ENCODE measurements at regions of chr10 and their contacts with region 1.

Region 1: GRCh38 chr10:71727738-71728737 is 8.5 kb upstream of the C10orf105 start:
- DNase-seq: peak; percentile 41
- H3K4me3 Mint-ChIP-seq: peak overlapping the region; percentile 49
- H3K27ac Mint-ChIP-seq: peak overlapping the region; percentile 97
- H3K4me1 Mint-ChIP-seq: peaks cover 67% of the 10 kb centered on the region
- H3K27me3 Mint-ChIP-seq: no peaks in the 10 kb centered on the region

Region 2: GRCh38 chr10:71713135-71714030 is 14.7 kb before region 1 on chr10:
- intact Hi-C with region 1: loop called (anchors 1 kb)
- DNase-seq: peak; percentile 28
- H3K4me3 Mint-ChIP-seq: peak overlapping the region; percentile 64
- H3K27ac Mint-ChIP-seq: peak overlapping the region; percentile 99
- H3K4me1 Mint-ChIP-seq: peaks cover 36% of the 10 kb centered on the region
- H3K27me3 Mint-ChIP-seq: no peaks in the 10 kb centered on the region

Region 3: GRCh38 chr10:71748671-71749191 is 20.7 kb after region 1 on chr10:
- intact Hi-C with region 1: loop called (anchors 1 kb)
- DNase-seq: peak; percentile 83
- H3K4me3 Mint-ChIP-seq: peak overlapping the region; percentile 69
- H3K27ac Mint-ChIP-seq: peak overlapping the region; percentile 99
- H3K4me1 Mint-ChIP-seq: peaks cover 85% of the 10 kb centered on the region
- H3K27me3 Mint-ChIP-seq: no peaks in the 10 kb centered on the region

Region 4: GRCh38 chr10:71790749-71791552 is 62.9 kb after region 1 on chr10:
- intact Hi-C with region 1: no loop called
- DNase-seq: no peak
- H3K4me3 Mint-ChIP-seq: no peak overlapping the region
- H3K27ac Mint-ChIP-seq: no peak overlapping the region
- H3K4me1 Mint-ChIP-seq: peaks cover 6% of the 10 kb centered on the region
- H3K27me3 Mint-ChIP-seq: peaks cover 2% of the 10 kb centered on the region

Region 5: DNA sequence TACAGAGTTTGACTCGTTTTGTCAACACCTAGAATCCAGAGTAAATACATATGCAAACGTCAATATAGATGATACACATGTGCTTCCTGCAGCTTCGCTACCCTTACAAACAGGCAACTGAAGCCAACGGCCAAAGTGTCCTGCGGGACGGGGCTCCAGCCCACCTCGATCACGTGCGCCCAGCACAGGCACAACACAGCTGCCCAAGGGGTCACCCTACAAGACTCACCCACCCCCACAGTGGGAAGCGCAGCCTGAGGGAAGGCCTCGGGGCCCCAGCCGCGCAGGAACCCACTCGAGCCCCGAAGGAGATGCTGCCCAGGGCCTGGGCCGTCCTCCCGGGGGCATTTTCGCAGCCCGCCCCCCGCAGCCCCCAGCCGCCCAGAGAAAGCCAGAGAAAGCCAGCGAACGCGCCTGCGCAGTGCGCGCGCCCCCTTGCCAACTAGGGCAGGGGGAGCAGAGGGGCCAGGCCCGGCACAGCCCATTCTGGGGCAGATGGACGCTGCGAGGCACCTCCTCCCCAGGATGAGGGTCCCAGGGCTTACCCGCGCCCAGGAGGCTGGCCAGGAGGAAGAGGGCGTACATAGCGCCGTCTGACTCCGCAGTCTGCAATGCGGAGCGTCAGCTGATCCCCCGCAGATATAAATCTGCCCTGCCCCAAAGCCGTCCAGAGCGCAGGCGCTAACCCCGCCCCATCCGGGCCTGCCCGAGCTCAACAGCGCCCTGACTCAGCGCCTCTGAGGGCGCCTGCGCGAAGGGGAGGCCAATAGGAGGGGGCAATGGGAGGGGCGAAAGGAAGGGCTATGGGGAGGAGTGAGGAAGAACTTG is 122.8 kb after region 1 on chr10 and contains the start of gene PSAP:
- intact Hi-C with region 1: loop called (anchors 5 kb)
- DNase-seq: peak; percentile 98
- H3K4me3 Mint-ChIP-seq: peak within 1 kb of the TSS; percentile 92
- H3K27ac Mint-ChIP-seq: peak within 1 kb of the TSS; percentile 64
- H3K4me1 Mint-ChIP-seq: peaks cover 34% of the 10 kb centered on the region
- H3K27me3 Mint-ChIP-seq: no peaks in the 10 kb centered on the region
- total RNA-seq, gene PSAP: 108 and 110 TPM in 2 replicates